ENCODE measurements at regions of chr2 and their contacts with region 1.

Region 1: DNA sequence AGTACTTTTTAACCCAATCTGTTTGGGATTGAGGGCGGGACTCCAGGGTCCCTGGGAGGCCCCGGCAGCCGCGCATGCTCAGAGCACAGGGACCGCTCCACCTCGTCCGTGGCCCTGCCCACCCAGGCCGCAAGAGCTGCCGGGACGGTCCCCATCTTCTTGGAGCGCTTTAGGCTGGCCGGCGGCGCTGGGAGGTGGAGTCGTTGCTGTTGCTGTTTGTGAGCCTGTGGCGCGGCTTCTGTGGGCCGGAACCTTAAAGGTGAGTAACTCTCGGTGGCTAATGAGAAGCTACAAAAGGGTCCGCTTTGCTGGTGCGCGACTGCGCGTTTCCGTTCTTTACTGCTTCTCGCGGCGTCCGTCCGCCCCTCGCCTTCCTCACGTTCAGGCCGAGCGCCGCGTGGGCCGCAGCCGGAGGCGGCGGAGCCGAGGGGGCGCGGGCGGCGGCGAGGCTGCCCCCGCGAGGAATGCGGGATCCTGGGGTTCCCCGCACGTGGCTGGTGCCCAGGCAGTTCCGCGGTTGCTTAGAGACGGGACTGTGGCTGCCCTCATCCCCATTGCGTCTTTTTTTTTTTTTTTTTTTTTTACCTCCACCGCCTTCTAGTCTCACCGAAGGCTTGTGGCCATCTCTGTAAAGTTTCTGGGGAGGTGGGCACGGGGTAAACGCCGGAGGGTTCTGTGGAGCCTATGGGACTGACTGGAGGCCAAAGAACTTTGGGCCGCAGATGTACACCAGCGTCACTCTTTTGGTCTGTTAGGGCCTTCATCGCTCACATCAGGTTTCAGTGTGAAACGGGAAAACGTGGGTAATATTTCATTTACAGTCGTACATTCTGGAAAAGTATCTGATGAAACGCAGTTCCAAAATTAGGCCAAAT is at the start of gene SSB:
- DNase-seq: peak; percentile 98
- H3K4me3 Mint-ChIP-seq: peak within 1 kb of the TSS; percentile 87
- H3K27ac Mint-ChIP-seq: peak within 1 kb of the TSS; percentile 90
- H3K4me1 Mint-ChIP-seq: peaks cover 25% of the 10 kb centered on the region
- H3K27me3 Mint-ChIP-seq: peaks cover 2% of the 10 kb centered on the region
- total RNA-seq, gene SSB: 112 to 120 TPM

Region 2: GRCh38 chr2:169573160-169573973 is 225.6 kb before region 1 on chr2 and contains the start of gene FASTKD1:
- CTCF ChIA-PET with region 1: no interaction called
- POLR2A ChIA-PET with region 1: interaction called, 3 read pairs
- intact Hi-C with region 1: loop called (anchors 1 kb)
- DNase-seq: peak; percentile 93
- H3K4me3 Mint-ChIP-seq: peak within 1 kb of the TSS; percentile 100
- H3K27ac Mint-ChIP-seq: peak within 1 kb of the TSS; percentile 89
- H3K4me1 Mint-ChIP-seq: peaks cover 25% of the 10 kb centered on the region
- H3K27me3 Mint-ChIP-seq: no peaks in the 10 kb centered on the region
- total RNA-seq, gene FASTKD1: 41.6 to 47.6 TPM

Region 3: DNA sequence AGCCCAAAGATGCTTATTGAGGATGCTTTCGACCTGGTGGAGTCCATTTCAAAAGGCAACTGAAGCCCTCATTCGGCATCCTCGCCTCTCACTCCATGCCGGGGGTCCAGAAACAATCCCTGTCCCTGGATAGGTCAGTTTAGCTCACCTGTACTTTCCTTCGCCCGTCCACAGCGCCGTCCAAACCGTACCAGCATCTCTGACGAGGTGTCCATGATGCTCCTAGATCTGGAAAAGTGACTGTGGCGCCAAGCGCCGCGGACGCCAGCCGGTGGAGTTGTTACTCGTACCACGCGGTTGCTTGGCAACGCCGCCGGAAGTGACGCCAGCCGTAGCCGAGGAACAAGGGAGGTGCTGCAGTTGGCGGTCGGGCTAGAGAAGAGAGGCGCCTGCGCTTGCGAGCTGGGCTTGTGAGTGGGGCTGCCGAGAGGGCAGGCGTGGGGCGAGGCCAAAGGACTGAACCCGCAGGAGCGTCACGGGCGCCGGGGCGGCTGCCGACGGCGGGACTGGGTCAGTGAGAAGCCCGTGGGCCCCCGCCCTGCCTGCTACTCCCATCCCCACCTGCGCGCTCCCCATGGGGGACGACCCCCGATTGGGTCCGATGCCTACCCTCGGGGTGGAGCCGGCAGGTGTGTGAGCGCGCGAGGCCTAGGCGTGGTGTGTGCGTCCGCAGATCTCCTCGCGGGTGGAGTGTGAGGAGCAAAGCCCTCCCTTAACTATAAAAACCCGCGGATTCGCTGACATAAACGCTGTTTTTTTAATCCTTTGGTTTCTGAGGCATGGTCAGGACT is 104.6 kb before region 1 on chr2 and contains the starts of genes CFAP210 and PHOSPHO2:
- CTCF ChIA-PET with region 1: no interaction called
- POLR2A ChIA-PET with region 1: interaction called, 4 read pairs
- intact Hi-C with region 1: loop called (anchors 1 kb)
- DNase-seq: peak; percentile 99
- H3K4me3 Mint-ChIP-seq: peak within 1 kb of the TSS; percentile 90
- H3K27ac Mint-ChIP-seq: peak within 1 kb of the TSS; percentile 68
- H3K4me1 Mint-ChIP-seq: peaks cover 16% of the 10 kb centered on the region
- H3K27me3 Mint-ChIP-seq: peaks cover 6% of the 10 kb centered on the region
- total RNA-seq, gene CFAP210: not detected
- total RNA-seq, gene PHOSPHO2: 2.6 to 3.4 TPM

Region 4: DNA sequence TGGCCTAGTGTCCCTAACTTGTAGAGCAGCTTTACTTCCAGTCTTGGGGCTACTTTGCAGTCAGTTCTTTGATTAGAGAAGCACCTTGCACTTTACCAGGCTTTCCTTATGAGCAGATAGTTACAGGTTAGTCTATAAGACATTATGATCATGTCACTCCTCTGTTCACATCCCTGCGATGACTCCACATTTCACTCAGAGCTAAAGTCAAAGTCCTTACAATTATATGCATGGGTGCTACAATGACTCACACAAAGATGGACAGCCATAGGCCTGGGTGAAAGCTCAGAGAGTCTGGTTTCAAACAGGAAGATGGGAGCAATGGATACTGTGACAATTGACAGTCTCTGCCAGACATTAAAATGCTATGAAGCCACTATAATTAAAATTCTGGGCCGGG is 27.3 kb before region 1 on chr2:
- CTCF ChIA-PET with region 1: interaction called, 3 read pairs
- POLR2A ChIA-PET with region 1: no interaction called
- intact Hi-C with region 1: loop called (anchors 2 kb)
- DNase-seq: no peak
- H3K4me3 Mint-ChIP-seq: no peak overlapping the region
- H3K27ac Mint-ChIP-seq: no peak overlapping the region
- H3K4me1 Mint-ChIP-seq: peaks cover 7% of the 10 kb centered on the region
- H3K27me3 Mint-ChIP-seq: peaks cover 10% of the 10 kb centered on the region

Measured in activated CD4-positive, alpha-beta memory T cell treated with anti-CD3 and anti-CD28 coated beads for 36 hours (primary cell).